Activated naive CD4-positive, alpha-beta T cell treated with anti-CD3 and anti-CD28 coated beads for 36 hours (primary cell): ENCODE measurements at regions of chr17 and their contacts with region 1.

Region 1: GRCh38 chr17:68435876-68436842 is 21.1 kb downstream of the WIPI1 start:
- DNase-seq: peak; percentile 94
- H3K4me3 Mint-ChIP-seq: no peak overlapping the region
- H3K27ac Mint-ChIP-seq: no peak overlapping the region
- H3K4me1 Mint-ChIP-seq: peaks cover 35% of the 10 kb centered on the region
- H3K27me3 Mint-ChIP-seq: no peaks in the 10 kb centered on the region

Region 2: DNA sequence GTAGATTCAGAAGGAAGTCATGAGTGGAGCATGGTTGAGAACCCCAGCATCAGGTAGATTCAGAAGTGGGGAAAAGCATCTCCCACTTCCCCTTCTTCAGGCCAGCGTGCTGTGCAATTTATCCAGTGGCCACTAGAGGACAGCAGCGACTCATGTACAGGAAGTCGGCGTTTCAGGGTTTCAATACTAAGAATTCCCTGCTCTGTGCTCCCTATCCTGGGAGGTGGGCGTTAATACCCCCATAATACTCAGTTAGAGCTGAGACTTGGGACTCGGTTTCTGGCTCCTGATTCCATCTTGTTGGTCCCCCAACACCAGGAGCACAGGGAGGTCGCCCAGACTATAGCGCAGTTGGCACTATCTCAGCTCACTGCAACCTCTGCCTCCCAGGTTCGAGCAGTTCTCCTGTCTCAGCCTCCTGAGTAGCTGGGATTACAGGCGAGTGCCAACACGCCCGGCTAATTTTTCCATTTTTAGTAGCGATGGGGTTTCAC is 263.7 kb before region 1 on chr17:
- CTCF ChIA-PET with region 1: interaction called, 10 read pairs
- intact Hi-C with region 1: loop called (anchors 1 kb)
- DNase-seq: peak; percentile 86
- H3K4me3 Mint-ChIP-seq: no peak overlapping the region
- H3K27ac Mint-ChIP-seq: no peak overlapping the region
- H3K4me1 Mint-ChIP-seq: peaks cover 15% of the 10 kb centered on the region
- H3K27me3 Mint-ChIP-seq: no peaks in the 10 kb centered on the region

Region 3: DNA sequence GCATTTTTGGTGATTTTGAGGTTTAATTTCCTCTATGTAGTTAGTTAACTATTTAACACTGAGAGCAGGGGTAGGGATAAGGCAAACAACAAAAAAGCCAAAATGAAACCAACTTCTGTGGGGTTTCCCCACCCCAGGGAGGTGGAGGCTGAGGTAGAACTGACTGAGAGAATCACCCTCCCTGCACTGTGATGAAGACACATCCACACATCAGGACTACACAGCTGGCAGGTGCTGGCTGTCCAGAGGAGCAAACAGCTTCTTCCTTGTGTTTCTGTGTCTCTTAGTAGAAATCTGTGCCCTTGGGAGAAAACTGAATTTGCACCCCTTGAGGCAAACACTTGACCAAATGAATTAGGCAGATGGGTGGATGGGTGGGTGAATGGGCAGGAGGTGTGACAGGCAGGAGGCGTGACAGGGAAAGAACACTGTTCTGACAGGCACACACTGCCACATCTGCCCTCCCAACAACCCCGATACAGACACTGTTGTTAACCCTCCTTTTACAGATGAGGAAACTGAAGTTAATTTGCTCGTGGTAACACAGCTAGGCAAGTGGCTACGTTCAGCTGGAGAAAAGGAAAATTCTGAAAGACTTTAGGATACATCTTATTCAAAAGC is 251.2 kb before region 1 on chr17:
- CTCF ChIA-PET with region 1: interaction called, 4 read pairs
- intact Hi-C with region 1: loop called (anchors 2 kb)
- DNase-seq: peak; percentile 78
- H3K4me3 Mint-ChIP-seq: peak overlapping the region; percentile 40
- H3K27ac Mint-ChIP-seq: peak overlapping the region; percentile 68
- H3K4me1 Mint-ChIP-seq: peaks cover 48% of the 10 kb centered on the region
- H3K27me3 Mint-ChIP-seq: no peaks in the 10 kb centered on the region

Region 4: DNA sequence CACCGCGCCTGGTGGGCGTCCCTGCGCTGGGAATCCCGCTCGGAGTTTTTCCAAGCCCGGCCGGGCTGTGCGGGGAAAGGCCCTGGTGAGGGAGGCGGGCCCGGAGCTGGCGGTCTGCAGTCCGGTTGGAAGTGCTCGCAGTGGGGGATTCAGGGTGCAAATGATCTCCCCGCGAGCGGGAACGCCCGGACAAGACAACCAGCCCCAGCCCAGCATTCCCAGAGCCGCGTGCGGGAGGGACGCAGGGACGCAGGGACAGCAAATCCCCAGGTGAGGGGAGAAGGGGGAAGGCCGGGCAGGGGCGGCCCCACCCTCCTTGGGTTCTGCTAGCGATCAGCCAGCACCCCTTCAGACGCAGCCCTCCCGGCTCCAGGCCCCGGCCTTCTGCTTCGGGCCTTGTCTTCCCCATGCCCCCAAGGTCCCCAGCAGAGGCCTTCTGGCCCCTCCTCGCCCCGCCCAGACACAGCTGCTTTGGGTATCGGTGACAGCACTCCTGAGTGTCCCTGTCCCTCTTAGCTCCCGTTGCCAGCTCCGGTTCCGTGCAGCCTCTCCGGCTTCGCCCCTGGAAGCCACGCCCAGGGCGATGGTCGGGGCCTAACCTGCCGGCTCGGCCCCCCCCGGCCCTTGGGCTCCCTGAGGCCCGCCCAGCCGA is 239.1 kb before region 1 on chr17:
- CTCF ChIA-PET with region 1: no interaction called
- intact Hi-C with region 1: loop called (anchors 1 kb)
- DNase-seq: no peak
- H3K4me3 Mint-ChIP-seq: peak overlapping the region; percentile 65
- H3K27ac Mint-ChIP-seq: no peak overlapping the region
- H3K4me1 Mint-ChIP-seq: peaks cover 25% of the 10 kb centered on the region
- H3K27me3 Mint-ChIP-seq: peaks cover 32% of the 10 kb centered on the region

Region 5: GRCh38 chr17:68255731-68256538 is 180.2 kb before region 1 on chr17:
- CTCF ChIA-PET with region 1: interaction called, 97 read pairs
- intact Hi-C with region 1: no loop called
- DNase-seq: peak; percentile 54
- H3K4me3 Mint-ChIP-seq: no peak overlapping the region
- H3K27ac Mint-ChIP-seq: peak overlapping the region; percentile 92
- H3K4me1 Mint-ChIP-seq: peaks cover 76% of the 10 kb centered on the region
- H3K27me3 Mint-ChIP-seq: no peaks in the 10 kb centered on the region

Region 6: DNA sequence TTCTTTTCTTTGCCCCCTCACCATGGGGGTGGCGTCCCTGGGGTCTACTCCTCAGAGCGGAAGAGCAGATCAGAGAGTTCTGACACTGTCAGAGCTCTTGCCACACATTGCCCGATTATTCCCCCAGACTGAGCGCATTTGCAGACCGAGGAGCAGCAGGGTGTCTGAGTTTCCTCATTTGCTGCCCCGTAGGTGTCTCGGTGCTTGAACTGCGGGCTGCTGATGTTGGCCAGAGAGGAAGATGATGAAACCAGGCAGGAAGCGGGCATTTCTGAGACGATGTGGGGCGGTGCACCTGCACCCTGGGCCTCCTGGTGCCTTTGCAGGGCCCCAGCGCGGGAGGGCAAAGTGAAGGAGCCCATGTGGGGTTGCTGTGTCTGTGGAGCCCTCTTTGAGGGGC is 89.7 kb before region 1 on chr17:
- CTCF ChIA-PET with region 1: interaction called, 10 read pairs
- intact Hi-C with region 1: no loop called
- DNase-seq: peak; percentile 87
- H3K4me3 Mint-ChIP-seq: peak overlapping the region; percentile 75
- H3K27ac Mint-ChIP-seq: peak overlapping the region; percentile 91
- H3K4me1 Mint-ChIP-seq: peaks cover 66% of the 10 kb centered on the region
- H3K27me3 Mint-ChIP-seq: no peaks in the 10 kb centered on the region

Region 7: DNA sequence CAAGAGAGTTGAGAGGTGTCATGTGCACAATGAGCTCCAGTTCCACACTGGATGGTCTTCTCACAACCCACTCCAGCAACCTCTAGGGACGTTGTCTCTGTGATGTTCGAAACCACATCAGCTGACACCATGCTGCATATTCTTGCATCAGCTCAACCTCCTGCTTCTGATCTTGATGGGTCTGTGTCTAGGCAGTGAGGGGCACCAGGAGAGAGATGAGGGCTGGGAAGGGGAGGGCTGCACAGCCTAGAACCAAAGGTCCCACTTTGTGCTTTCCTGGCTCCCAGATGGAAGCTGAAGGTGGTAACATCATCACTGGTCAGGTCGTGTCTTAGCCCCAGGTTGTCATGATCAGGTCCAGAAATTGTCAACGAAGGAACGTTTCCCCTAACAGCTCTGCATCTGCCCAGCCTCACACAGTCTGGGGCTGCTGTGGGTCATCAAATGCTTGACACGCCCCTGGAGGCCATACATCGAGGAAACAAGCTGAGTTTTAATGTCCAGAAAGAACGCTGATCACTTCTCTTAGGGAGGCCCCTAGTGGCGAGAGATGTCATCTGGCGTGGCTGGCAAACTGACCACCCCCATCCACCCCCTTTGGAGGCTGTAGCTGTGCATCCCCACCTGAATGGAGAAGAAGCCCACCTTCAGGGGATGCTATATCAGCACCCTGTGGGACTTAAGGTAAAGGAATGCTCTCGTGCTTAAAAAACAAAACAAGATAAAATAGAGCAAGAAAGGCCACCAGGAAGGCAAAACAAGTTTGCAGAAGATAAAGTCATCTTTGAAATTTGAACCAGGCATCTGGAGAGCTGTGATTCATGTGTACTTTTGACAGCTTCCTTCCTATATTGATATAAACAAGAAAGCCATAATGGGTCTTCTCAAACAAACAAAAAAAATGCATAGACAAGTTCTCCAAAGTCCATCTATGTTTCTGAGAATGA is 37.2 kb before region 1 on chr17:
- CTCF ChIA-PET with region 1: interaction called, 22 read pairs
- intact Hi-C with region 1: loop called (anchors 1 kb)
- DNase-seq: peak; percentile 56
- H3K4me3 Mint-ChIP-seq: no peak overlapping the region
- H3K27ac Mint-ChIP-seq: peak overlapping the region; percentile 43
- H3K4me1 Mint-ChIP-seq: peaks cover 27% of the 10 kb centered on the region
- H3K27me3 Mint-ChIP-seq: no peaks in the 10 kb centered on the region